Caco-2 (cell line): ENCODE measurements at regions of chr19 and their contacts with region 1.

Region 1: GRCh38 chr19:11924886-11925650 is at the start of gene ZNF700:
- DNase-seq: peak; percentile 95 to 97
- H3K4me3 ChIP-seq: peak within 1 kb of the TSS; percentile 84
- H3K4me3 Mint-ChIP-seq: peak within 1 kb of the TSS; percentile 72
- H3K27ac Mint-ChIP-seq: peak within 1 kb of the TSS; percentile 97
- H3K4me1 ChIP-seq: peaks cover 12% of the 10 kb centered on the region
- H3K4me1 Mint-ChIP-seq: peaks cover 15% of the 10 kb centered on the region
- H3K27me3 ChIP-seq: no peaks in the 10 kb centered on the region
- H3K27me3 Mint-ChIP-seq: no peaks in the 10 kb centered on the region
- CTCF ChIP-seq: no peak
- total RNA-seq, gene ZNF700: 8.5 and 9.7 TPM in 2 replicates

Region 2: DNA sequence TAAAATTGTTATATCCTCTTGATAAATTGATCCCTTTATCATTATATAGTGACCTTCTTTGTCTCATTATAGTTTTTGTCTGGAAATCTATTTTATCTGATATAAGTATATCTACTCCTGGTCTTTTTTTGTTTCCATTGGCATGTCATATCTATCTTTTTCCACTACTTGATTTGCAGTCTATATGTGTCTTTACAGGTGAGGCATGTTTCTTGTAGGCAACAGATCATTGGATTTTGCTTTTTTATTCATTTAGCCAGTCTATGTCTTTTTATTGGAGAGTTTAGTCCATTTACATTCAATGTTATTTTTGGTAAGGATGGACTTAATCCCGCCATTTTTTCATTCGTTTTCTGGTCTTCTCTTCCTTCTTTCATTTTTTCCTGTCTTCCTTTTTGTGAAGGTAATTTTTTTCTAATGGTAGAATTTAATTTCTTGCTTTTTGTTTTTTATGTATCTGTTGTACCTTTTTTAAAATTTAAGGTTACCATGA is 172.8 kb before region 1 on chr19:
- CTCF ChIA-PET with region 1: no interaction called
- POLR2A ChIA-PET with region 1: no interaction called
- intact Hi-C with region 1: no loop called
- DNase-seq: no peak
- H3K4me3 ChIP-seq: no peak overlapping the region
- H3K4me3 Mint-ChIP-seq: no peak overlapping the region
- H3K27ac Mint-ChIP-seq: no peak overlapping the region
- H3K4me1 ChIP-seq: no peaks in the 10 kb centered on the region
- H3K4me1 Mint-ChIP-seq: no peaks in the 10 kb centered on the region
- H3K27me3 ChIP-seq: no peaks in the 10 kb centered on the region
- H3K27me3 Mint-ChIP-seq: peaks cover 2% of the 10 kb centered on the region
- CTCF ChIP-seq: no peak

Region 3: GRCh38 chr19:11881151-11881800 is 43.8 kb before region 1 on chr19:
- CTCF ChIA-PET with region 1: no interaction called
- POLR2A ChIA-PET with region 1: no interaction called
- intact Hi-C with region 1: loop called (anchors 1 kb)
- DNase-seq: peak; percentile 41 to 58
- H3K4me3 ChIP-seq: no peak overlapping the region
- H3K4me3 Mint-ChIP-seq: no peak overlapping the region
- H3K27ac Mint-ChIP-seq: no peak overlapping the region
- H3K4me1 ChIP-seq: no peaks in the 10 kb centered on the region
- H3K4me1 Mint-ChIP-seq: no peaks in the 10 kb centered on the region
- H3K27me3 ChIP-seq: no peaks in the 10 kb centered on the region
- H3K27me3 Mint-ChIP-seq: no peaks in the 10 kb centered on the region
- CTCF ChIP-seq: peak; percentile 38 to 62

Region 4: GRCh38 chr19:11913680-11914079 is 11.4 kb before region 1 on chr19:
- CTCF ChIA-PET with region 1: no interaction called
- POLR2A ChIA-PET with region 1: no interaction called
- intact Hi-C with region 1: no loop called
- DNase-seq: no peak
- H3K4me3 ChIP-seq: no peak overlapping the region
- H3K4me3 Mint-ChIP-seq: no peak overlapping the region
- H3K27ac Mint-ChIP-seq: no peak overlapping the region
- H3K4me1 ChIP-seq: no peaks in the 10 kb centered on the region
- H3K4me1 Mint-ChIP-seq: no peaks in the 10 kb centered on the region
- H3K27me3 ChIP-seq: no peaks in the 10 kb centered on the region
- H3K27me3 Mint-ChIP-seq: no peaks in the 10 kb centered on the region
- CTCF ChIP-seq: no peak

Region 5: GRCh38 chr19:11971041-11971440 is 46.0 kb after region 1 on chr19:
- CTCF ChIA-PET with region 1: no interaction called
- POLR2A ChIA-PET with region 1: no interaction called
- intact Hi-C with region 1: no loop called
- DNase-seq: no peak
- H3K4me3 ChIP-seq: no peak overlapping the region
- H3K4me3 Mint-ChIP-seq: no peak overlapping the region
- H3K27ac Mint-ChIP-seq: no peak overlapping the region
- H3K4me1 ChIP-seq: no peaks in the 10 kb centered on the region
- H3K4me1 Mint-ChIP-seq: no peaks in the 10 kb centered on the region
- H3K27me3 ChIP-seq: no peaks in the 10 kb centered on the region
- H3K27me3 Mint-ChIP-seq: no peaks in the 10 kb centered on the region
- CTCF ChIP-seq: no peak

Region 6: GRCh38 chr19:11987405-11988281 is 62.6 kb after region 1 on chr19:
- CTCF ChIA-PET with region 1: interaction called, 37 read pairs
- POLR2A ChIA-PET with region 1: no interaction called
- intact Hi-C with region 1: loop called (anchors 1 kb)
- DNase-seq: peak; percentile 81 to 92
- H3K4me3 ChIP-seq: peak overlapping the region; percentile 71
- H3K4me3 Mint-ChIP-seq: peak overlapping the region; percentile 91
- H3K27ac Mint-ChIP-seq: peak overlapping the region; percentile 65
- H3K4me1 ChIP-seq: no peaks in the 10 kb centered on the region
- H3K4me1 Mint-ChIP-seq: peaks cover 8% of the 10 kb centered on the region
- H3K27me3 ChIP-seq: no peaks in the 10 kb centered on the region
- H3K27me3 Mint-ChIP-seq: no peaks in the 10 kb centered on the region
- CTCF ChIP-seq: no peak